ENCODE measurements at regions of chr12 and their contacts with region 1.

Region 1: GRCh38 chr12:52870351-52871290 is 21.8 kb upstream of the KRT78 start:
- DNase-seq: peak; percentile 70 to 94 (median 82)
- ATAC-seq: peak; percentile 79
- H3K4me3 ChIP-seq: no peak overlapping the region
- H3K4me3 Mint-ChIP-seq: peak overlapping the region in 1 of 10 donors; percentile 29
- H3K27ac ChIP-seq: no peak overlapping the region
- H3K27ac Mint-ChIP-seq: peak overlapping the region in 8 of 9 donors; percentile 19 to 95 (median 74)
- H3K4me1 ChIP-seq: peaks cover 0 to 26% of the 10 kb centered on the region in 2 donors
- H3K4me1 Mint-ChIP-seq: peaks cover 29 to 56% (median 47%) of the 10 kb centered on the region in 7 donors
- H3K27me3 ChIP-seq: no peaks in the 10 kb centered on the region
- H3K27me3 Mint-ChIP-seq: peaks cover 0 to 13% (median 0%) of the 10 kb centered on the region in 5 donors

Region 2: GRCh38 chr12:52372216-52373154 is 498.1 kb before region 1 on chr12:
- CTCF ChIA-PET with region 1: interaction called, 11 read pairs
- POLR2A ChIA-PET with region 1: no interaction called
- intact Hi-C with region 1: loop called in 1 of 2 experiments (anchors 1 kb)
- DNase-seq: peak in 7 of 9 donors; percentile 30 to 60 (median 42)
- ATAC-seq: peak; percentile 70
- H3K4me3 ChIP-seq: no peak overlapping the region
- H3K4me3 Mint-ChIP-seq: no peak overlapping the region
- H3K27ac ChIP-seq: no peak overlapping the region
- H3K27ac Mint-ChIP-seq: no peak overlapping the region
- H3K4me1 ChIP-seq: no peaks in the 10 kb centered on the region
- H3K4me1 Mint-ChIP-seq: no peaks in the 10 kb centered on the region
- H3K27me3 ChIP-seq: no peaks in the 10 kb centered on the region
- H3K27me3 Mint-ChIP-seq: peaks cover 2 to 31% (median 10%) of the 10 kb centered on the region in 5 donors

Region 3: GRCh38 chr12:52608831-52609630 is 261.6 kb before region 1 on chr12:
- CTCF ChIA-PET with region 1: interaction called, 15 read pairs
- POLR2A ChIA-PET with region 1: interaction called, 8 read pairs
- intact Hi-C with region 1: loop called in 1 of 2 experiments (anchors 1 kb)
- DNase-seq: peak in 1 of 9 donors; percentile 14
- ATAC-seq: no peak
- H3K4me3 ChIP-seq: peak overlapping the region; percentile 4
- H3K4me3 Mint-ChIP-seq: peak overlapping the region in 9 of 10 donors; percentile 42 to 87 (median 66)
- H3K27ac ChIP-seq: peak overlapping the region; percentile 79
- H3K27ac Mint-ChIP-seq: peak overlapping the region; percentile 59 to 99 (median 97)
- H3K4me1 ChIP-seq: peaks cover 6 to 96% of the 10 kb centered on the region in 2 donors
- H3K4me1 Mint-ChIP-seq: peaks cover 68 to 100% (median 98%) of the 10 kb centered on the region in 7 donors
- H3K27me3 ChIP-seq: no peaks in the 10 kb centered on the region
- H3K27me3 Mint-ChIP-seq: peaks cover 0 to 4% (median 0%) of the 10 kb centered on the region in 5 donors

Region 4: GRCh38 chr12:52691076-52691840 is 179.4 kb before region 1 on chr12:
- CTCF ChIA-PET with region 1: interaction called, 7 read pairs
- POLR2A ChIA-PET with region 1: no interaction called
- intact Hi-C with region 1: loop called in 1 of 2 experiments (anchors 5 kb)
- DNase-seq: peak; percentile 46 to 74 (median 71)
- ATAC-seq: peak; percentile 91
- H3K4me3 ChIP-seq: peak overlapping the region; percentile 50
- H3K4me3 Mint-ChIP-seq: peak overlapping the region; percentile 85 to 97 (median 91)
- H3K27ac ChIP-seq: peak overlapping the region; percentile 68
- H3K27ac Mint-ChIP-seq: peak overlapping the region in 8 of 9 donors; percentile 90 to 98 (median 97)
- H3K4me1 ChIP-seq: peaks cover 5 to 27% of the 10 kb centered on the region in 2 donors
- H3K4me1 Mint-ChIP-seq: peaks cover 8 to 63% (median 55%) of the 10 kb centered on the region in 7 donors
- H3K27me3 ChIP-seq: no peaks in the 10 kb centered on the region
- H3K27me3 Mint-ChIP-seq: peaks cover 0 to 79% (median 0%) of the 10 kb centered on the region in 5 donors

Region 5: GRCh38 chr12:52918351-52918750 is 47.7 kb after region 1 on chr12:
- CTCF ChIA-PET with region 1: no interaction called
- POLR2A ChIA-PET with region 1: no interaction called
- intact Hi-C with region 1: no loop called
- DNase-seq: no peak
- ATAC-seq: no peak
- H3K4me3 ChIP-seq: no peak overlapping the region
- H3K4me3 Mint-ChIP-seq: no peak overlapping the region
- H3K27ac ChIP-seq: no peak overlapping the region
- H3K27ac Mint-ChIP-seq: no peak overlapping the region
- H3K4me1 ChIP-seq: no peaks in the 10 kb centered on the region
- H3K4me1 Mint-ChIP-seq: no peaks in the 10 kb centered on the region
- H3K27me3 ChIP-seq: no peaks in the 10 kb centered on the region
- H3K27me3 Mint-ChIP-seq: peaks cover 0 to 17% (median 5%) of the 10 kb centered on the region in 5 donors